Posterior cingulate gyrus (tissue), 11 donors: ENCODE measurements at regions of chr1 and their contacts with region 1.

Region 1: DNA sequence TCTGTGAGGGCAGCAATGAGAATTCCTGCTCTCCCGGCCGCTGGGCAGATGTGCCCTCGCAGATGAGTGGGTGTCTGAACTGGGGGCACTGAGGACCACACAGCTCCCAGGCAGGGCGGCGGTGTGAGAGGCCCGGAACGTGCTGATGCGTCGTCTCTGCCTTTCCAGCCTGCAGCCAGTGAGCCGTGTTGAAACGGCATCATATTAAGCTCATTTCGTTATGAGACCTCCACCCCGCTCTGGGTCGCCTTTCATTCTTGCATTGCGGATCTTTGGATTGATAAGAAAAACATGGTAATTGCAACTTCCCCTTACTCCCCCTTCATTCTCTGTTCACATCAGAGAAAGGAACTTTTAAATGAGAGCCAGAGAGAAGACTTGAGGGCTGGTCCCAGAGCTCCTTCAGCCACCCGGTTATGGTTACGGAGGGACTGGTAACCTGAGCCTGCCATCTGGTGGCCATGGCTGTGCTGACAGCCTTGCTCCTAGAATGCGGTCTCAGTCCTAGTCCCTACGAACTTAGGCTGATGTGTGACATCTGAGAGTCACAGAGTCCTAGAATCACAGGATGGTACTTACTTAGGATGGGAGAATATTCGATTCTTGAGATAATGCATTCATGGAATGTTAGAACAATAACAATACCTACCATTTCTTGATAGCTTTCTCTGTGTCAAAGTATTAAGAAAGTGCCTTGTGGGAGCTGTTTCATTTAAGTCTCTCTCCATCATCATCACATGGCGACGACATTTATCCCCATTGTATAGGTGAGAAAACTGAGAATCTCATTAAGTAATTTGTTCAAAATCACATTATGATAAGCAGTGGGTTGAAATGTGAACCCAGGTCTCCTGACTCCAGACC is 271.0 kb downstream of the TRABD2B start:
- DNase-seq: peak; percentile 57 to 97 (median 84)

Region 2: DNA sequence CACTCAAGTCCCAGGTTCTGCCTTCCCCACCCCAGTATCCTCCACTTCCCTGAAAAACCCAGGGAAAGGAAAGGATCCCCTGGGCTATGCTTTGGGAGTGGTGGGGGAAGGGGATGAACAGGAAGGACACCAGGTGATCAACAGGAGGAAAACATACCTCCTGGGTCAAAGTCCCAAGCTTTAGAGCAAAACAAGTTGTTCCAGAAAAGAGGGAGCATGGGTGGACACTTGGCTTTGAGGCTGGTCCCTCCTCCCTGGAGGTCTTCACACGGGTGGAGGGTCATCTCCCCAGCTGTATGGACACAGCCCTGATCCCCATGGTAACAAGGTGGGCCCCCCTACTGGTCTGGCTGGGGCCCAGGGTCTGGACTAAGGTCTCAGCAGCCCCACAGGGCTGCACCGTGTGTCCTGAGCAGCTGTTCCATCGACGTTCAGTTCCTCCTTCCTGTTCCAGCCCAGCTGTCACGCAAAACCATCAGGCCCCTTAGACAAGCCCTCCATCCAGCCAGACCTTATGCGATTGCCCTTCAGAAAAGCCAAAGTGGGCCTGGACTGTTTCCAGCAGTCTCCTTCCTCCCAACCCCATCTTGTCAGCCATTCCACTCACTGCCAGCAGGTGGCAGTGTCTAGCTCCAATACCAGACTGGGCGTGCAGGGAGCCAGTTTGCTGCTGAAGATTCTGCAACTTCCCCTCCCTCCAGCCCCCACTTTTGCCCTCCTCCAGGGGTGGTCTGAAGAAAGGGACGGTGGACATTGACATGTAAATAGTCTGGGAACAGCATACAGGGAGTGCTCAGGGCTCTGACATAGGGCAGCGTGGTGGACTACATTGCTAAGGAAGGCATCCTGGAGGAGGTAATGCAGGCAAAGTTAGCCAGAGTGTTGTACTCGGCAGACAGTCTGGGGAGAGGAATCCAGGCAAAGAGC is 533.5 kb before region 1 on chr1:
- intact Hi-C with region 1: loop called (anchors 5 kb)
- DNase-seq: peak in 8 of 10 donors; percentile 60 to 94 (median 72)

Region 3: GRCh38 chr1:47432071-47433036 is 293.9 kb before region 1 on chr1:
- intact Hi-C with region 1: loop called (anchors 1 kb)
- DNase-seq: peak; percentile 32 to 95 (median 75)

Region 4: GRCh38 chr1:47763591-47764171 is 37.5 kb after region 1 on chr1:
- intact Hi-C with region 1: no loop called
- DNase-seq: peak in 2 of 10 donors; percentile 25 to 55

Region 5: DNA sequence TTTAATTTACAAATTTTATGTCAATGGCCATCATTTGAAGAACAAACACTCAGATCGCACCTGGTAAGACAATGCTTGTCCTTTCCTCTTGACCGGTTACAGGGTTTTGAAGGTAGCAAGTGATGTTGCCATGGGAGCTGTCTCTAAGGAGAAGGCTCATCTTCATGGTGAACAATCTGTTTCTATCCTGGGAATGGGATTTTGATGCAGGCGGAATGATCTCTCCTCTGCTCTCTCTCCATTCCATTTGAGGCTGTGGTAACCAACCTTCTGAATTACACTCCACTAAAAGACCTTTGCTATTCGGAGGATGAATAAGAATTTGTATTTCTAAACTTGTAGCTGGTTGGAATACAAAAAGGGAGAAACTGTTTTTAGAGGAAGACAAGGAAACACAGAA is 438.3 kb after region 1 on chr1:
- intact Hi-C with region 1: no loop called
- DNase-seq: no peak

Region 6: GRCh38 chr1:48530727-48531351 is 804.6 kb after region 1 on chr1:
- intact Hi-C with region 1: no loop called
- DNase-seq: peak in 9 of 10 donors; percentile 30 to 93 (median 56)